Activated naive CD4-positive, alpha-beta T cell treated with anti-CD3 and anti-CD28 coated beads for 36 hours (primary cell): ENCODE measurements at regions of chr6 and their contacts with region 1.

Region 1: DNA sequence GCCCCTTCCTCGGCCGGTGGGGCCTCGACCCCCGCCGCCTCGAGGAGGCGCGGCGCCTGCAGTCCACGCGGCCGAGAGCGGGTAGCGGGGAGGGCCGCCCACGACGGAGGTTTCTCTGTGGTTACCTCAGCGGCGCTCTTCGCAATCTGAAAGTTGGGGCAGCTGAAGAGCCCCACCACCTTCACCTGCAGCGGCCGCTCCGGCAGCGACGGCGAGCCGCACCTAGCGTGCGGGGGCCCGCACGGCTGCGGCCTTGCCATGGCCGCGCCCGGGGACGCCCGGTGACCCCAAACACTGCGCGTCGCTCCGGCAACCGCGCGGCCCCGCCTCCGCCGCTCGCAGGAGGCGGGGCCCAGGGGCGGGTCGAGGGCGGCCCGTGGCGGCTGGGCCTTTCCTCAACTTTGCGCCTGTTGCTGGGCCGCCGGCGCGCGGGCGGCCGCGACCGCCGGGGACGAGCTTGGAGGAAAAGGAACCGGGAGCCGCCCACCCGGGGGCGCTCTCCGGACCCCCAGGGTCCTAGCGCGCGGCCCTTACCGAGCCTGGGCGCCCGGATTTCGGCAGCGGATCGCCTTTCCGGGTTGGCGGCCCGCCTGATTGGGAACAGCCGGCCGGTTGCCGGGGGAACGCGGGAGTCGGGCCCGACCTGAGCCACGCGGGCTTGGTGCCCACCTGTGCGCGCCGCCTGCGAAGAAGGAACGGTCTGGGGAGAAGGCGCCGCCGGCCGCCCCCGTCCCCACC is at the starts of genes PPIL6 and SMPD2:
- DNase-seq: peak; percentile 76
- H3K4me3 Mint-ChIP-seq: peak within 1 kb of the TSS; percentile 94
- H3K27ac Mint-ChIP-seq: peak within 1 kb of the TSS; percentile 87
- H3K4me1 Mint-ChIP-seq: peaks cover 27% of the 10 kb centered on the region
- H3K27me3 Mint-ChIP-seq: no peaks in the 10 kb centered on the region
- total RNA-seq, gene PPIL6: 0.19 TPM in 1 of 2 experiments, not detected in the other
- total RNA-seq, gene SMPD2: 9.4 to 9.7 TPM

Region 2: DNA sequence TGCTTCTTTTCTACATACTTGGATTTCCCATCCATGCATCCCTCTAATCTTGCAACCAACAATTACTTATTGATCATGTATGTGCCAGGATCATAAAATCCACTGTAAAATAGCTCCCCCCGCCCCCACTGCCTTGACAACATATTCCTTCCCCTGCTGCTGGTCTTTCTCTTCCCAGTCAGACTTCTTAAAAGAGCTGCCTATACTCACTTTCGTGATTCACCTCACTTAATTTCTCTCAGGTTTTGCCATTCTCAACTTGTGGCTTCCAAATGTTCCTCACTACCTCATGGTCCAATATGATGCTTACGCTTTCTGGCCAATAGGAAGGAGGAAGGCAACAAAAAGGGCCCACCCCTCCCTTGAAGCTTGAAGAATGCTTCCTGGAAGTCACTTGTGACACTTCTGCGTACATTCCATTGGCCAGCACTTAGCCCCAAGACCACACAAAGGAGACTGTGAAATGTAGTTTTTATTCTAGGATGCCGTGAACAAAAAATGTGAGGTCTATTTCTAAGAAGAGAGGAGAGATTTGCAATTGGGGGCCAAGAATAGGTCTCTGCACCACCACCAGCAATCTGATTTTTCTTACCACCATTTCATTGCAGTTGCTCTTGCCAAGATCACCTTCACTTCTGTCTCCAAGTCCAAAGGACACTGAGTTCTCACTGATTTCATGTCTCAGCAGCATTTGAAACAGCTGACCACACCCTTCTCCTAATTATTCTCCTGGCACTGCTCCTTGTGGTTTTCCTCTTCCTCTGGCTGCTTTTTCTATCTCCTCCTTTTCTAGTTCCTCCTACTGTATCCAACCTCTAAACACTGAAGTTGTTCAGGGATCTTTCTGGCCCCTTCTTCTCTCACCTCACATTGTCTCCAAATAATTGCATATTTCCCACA is 89.0 kb before region 1 on chr6:
- CTCF ChIA-PET with region 1: no interaction called
- intact Hi-C with region 1: no loop called
- DNase-seq: no peak
- H3K4me3 Mint-ChIP-seq: no peak overlapping the region
- H3K27ac Mint-ChIP-seq: no peak overlapping the region
- H3K4me1 Mint-ChIP-seq: no peaks in the 10 kb centered on the region
- H3K27me3 Mint-ChIP-seq: no peaks in the 10 kb centered on the region

Region 3: GRCh38 chr6:109455502-109456282 is 15.2 kb after region 1 on chr6 and contains the start of gene MICAL1:
- CTCF ChIA-PET with region 1: interaction called, 12 read pairs
- intact Hi-C with region 1: loop called (anchors 1 kb)
- DNase-seq: peak; percentile 69
- H3K4me3 Mint-ChIP-seq: peak within 1 kb of the TSS; percentile 91
- H3K27ac Mint-ChIP-seq: peak within 1 kb of the TSS; percentile 82
- H3K4me1 Mint-ChIP-seq: peaks cover 54% of the 10 kb centered on the region
- H3K27me3 Mint-ChIP-seq: no peaks in the 10 kb centered on the region
- total RNA-seq, gene MICAL1: 20.4 to 22.9 TPM

Region 4: DNA sequence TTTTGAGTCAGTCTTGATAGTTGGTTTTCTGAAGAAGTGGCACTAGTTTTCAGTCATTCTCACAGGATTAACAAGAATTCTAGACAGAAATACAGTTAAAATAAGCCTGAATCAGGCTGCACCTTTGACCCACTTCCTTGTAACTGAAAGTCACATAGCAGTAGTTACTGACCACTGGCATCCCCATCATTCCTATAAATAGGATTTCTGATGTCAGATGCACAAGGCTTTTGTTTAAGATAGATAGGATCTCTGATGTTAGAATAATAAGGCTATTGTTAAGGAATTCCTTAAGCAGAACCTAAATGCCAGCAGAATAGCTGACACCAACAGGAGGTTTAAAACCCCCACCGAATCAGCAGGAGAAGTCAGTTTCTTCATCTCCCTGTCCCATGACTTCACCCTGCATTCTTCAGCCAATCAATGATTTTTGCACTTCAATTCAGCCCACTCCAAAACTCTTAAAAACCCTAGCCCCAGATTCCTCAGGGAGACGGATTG is 73.1 kb after region 1 on chr6:
- CTCF ChIA-PET with region 1: no interaction called
- intact Hi-C with region 1: loop called (anchors 1 kb)
- DNase-seq: no peak
- H3K4me3 Mint-ChIP-seq: no peak overlapping the region
- H3K27ac Mint-ChIP-seq: no peak overlapping the region
- H3K4me1 Mint-ChIP-seq: peaks cover 22% of the 10 kb centered on the region
- H3K27me3 Mint-ChIP-seq: no peaks in the 10 kb centered on the region